ENCODE measurements at regions of chr4 and their contacts with region 1.

Region 1: DNA sequence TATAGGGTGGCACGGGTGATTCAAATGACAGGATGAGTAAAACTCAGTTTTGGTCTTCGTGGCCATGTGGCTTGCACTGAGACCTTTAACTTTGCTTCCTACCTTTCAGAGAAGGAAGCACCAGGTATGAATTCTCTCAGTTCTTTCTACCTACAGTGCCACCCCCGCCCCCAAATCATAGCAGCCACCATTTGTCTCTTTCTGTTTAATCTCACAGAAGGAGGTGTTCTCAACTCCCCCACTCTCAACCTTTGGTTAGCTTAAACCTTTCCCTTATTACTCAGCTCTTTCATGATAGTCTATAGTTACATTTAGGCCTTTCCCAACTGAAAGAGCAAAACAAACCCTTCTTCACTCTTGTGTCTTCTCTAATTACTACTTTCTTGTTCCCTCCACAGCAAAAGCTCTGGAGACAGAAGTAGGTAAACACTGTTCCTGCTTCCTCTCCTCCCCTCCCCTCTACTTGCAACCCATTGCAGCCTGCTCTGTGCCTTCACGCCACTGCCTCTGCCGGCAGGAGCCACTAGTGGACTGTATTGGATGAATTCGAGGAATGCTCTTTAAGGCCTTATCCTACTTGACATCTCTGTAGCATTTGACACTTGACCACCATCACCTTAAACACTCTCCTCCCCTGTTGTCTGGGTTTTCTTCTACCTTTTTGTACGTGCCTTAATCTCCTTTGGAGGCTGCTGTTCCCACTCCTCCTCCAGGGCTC is 123.7 kb downstream of the AFF1 start:
- DNase-seq: no peak
- H3K4me3 Mint-ChIP-seq: peak overlapping the region; percentile 15
- H3K27ac Mint-ChIP-seq: peak overlapping the region; percentile 80
- H3K4me1 Mint-ChIP-seq: peaks cover 48% of the 10 kb centered on the region
- H3K27me3 Mint-ChIP-seq: no peaks in the 10 kb centered on the region

Region 2: GRCh38 chr4:87017580-87018342 is 40.8 kb before region 1 on chr4:
- intact Hi-C with region 1: loop called (anchors 1 kb)
- DNase-seq: no peak
- H3K4me3 Mint-ChIP-seq: peak overlapping the region; percentile 19
- H3K27ac Mint-ChIP-seq: peak overlapping the region; percentile 79
- H3K4me1 Mint-ChIP-seq: peaks cover 76% of the 10 kb centered on the region
- H3K27me3 Mint-ChIP-seq: no peaks in the 10 kb centered on the region

Region 3: DNA sequence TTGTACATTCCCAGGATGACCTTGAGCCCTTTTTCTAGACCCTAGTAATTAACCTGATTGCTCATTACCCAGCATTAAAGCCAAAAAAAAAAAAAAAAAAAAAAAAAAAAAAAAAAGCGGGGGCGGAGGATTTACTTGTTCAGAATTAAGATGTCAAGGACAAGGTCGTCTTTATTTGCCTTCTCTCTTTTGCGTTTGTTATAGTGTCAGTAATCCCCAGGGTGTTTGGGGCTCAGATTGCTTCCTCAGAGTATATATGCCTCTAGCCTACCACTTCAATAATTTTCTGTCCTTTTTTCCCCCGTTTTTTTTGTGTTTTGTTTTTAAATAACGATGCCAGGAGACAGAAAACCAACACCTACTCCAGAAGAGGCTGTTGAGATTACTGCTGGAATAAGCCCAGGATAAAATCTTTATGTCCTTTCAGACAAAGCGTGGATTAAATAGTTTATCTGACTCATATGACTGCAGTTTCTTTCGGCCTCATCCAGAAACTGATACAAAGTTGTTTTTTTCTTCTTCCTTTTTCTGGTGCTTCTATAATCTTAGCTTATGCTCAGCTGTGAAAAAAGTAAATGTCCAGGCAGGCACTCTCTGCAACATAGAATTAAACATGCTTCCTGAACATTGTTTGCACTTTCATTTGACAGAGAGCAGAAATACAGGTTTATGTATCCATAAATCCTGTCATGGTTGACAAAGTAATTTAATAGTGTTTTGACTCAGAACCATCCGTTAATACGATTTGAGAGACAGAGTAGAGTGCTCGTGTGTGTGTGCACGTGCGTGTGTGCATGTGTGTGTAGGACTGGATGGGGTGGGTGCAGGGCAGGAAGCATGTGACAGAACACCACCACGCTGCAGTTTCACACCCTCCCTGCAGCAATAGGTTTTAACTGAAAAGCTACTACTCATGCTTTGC is 14.9 kb after region 1 on chr4:
- intact Hi-C with region 1: loop called (anchors 1 kb)
- DNase-seq: peak; percentile 46
- H3K4me3 Mint-ChIP-seq: peak overlapping the region; percentile 74
- H3K27ac Mint-ChIP-seq: peak overlapping the region; percentile 88
- H3K4me1 Mint-ChIP-seq: peaks cover 48% of the 10 kb centered on the region
- H3K27me3 Mint-ChIP-seq: no peaks in the 10 kb centered on the region

Region 4: DNA sequence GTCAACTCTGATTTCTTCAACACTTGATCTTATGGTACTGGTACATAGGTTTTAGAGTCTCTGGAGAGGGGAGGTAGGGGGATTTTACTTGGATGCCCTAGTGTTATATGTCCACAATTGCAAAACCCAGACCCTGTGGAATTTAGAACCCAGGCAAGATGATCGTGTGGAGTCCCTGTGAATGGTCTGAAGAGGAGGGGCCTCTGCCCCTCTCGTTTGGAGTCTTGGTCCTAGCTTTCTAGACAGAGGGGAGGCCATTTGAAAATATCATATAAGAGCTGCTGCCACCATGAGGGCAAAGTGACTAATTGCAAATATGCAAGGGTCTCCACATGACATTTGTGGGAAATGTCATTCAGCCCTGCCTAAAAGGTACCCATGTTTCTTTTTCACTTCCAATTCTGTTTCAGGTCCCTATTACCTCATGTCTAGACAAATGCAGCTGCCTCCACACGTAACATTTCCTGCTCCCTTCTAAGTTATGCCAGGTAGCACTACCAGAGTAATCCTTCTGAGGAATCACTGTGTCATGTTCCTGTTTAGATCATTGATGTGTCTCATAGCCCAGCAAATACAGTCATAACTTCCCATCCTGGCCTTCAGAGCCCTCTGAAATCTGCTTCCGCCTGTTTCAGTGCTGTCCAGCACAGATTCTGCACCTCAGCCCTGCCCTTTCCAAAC is 35.1 kb after region 1 on chr4:
- intact Hi-C with region 1: loop called (anchors 2 kb)
- DNase-seq: no peak
- H3K4me3 Mint-ChIP-seq: no peak overlapping the region
- H3K27ac Mint-ChIP-seq: peak overlapping the region; percentile 24
- H3K4me1 Mint-ChIP-seq: peaks cover 22% of the 10 kb centered on the region
- H3K27me3 Mint-ChIP-seq: no peaks in the 10 kb centered on the region

Measured in activated T-helper 2 cell treated with anti-CD3 and anti-CD28 coated beads, Interferon-gamma antibody, Interleukin-2, Interleukin-4, amounts not matched to agents 10 μg/mL and 5 μg/mL and 100 μg/mL, durations not matched to agents 14 hours and 24 hours and 36 hours (primary cell).